Heart left ventricle (tissue), 16 donors: ENCODE measurements at regions of chr14 and their contacts with region 1.

Region 1: DNA sequence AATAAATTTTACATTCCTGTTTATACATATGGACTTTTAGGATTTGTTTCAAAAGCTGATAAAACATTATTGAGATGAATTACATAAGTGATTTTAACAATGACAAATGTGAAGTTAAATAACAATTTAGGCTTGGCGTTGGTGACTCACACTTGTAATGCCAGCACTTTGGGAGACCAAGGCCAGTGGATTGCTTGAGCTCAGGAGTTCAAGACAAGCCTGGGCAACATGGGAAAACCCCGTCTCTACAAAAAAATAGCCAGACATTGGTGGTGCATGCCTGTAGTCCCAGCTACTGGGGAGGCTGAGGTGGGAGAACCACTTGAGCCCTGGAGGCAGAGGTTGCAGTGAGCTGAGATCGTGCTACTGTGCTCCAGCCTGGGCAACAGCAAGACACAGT is 7.4 kb downstream of the ACOT2 start:
- DNase-seq: no peak
- ATAC-seq: no peak
- H3K4me3 ChIP-seq: no peak overlapping the region
- H3K27ac ChIP-seq: no peak overlapping the region
- H3K4me1 ChIP-seq: peaks cover 0 to 6% (median 0%) of the 10 kb centered on the region in 12 donors
- H3K27me3 ChIP-seq: no peaks in the 10 kb centered on the region
- CTCF ChIP-seq: no peak
- POLR2A ChIP-seq: no peak

Region 2: DNA sequence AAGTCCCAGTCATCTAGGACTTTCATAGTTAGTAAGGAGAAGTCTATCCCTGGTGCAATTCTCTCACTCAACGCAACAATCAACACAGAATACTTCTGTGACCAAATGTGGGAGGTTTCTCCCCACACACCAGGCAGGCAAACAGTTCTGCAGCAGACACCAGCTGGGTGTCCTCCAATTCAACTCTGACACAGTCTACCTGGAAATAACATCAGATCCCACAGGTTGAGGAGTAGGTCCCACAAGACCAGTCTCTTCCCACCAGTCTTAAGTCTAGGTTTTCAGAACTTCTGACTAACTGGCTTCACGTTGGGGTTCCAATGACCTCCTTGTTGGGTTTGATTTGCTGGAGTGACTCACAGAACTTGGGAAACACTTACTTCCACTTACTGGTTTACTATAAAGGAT is 50.8 kb after region 1 on chr14:
- intact Hi-C with region 1: loop called in 1 of 10 experiments (anchors 10 kb)
- DNase-seq: no peak
- ATAC-seq: no peak
- H3K4me3 ChIP-seq: no peak overlapping the region
- H3K27ac ChIP-seq: no peak overlapping the region
- H3K4me1 ChIP-seq: no peaks in the 10 kb centered on the region
- H3K27me3 ChIP-seq: no peaks in the 10 kb centered on the region
- CTCF ChIP-seq: no peak
- POLR2A ChIP-seq: no peak